Psoas muscle (tissue), 8 donors: ENCODE measurements at regions of chr3 and their contacts with region 1.

Region 1: DNA sequence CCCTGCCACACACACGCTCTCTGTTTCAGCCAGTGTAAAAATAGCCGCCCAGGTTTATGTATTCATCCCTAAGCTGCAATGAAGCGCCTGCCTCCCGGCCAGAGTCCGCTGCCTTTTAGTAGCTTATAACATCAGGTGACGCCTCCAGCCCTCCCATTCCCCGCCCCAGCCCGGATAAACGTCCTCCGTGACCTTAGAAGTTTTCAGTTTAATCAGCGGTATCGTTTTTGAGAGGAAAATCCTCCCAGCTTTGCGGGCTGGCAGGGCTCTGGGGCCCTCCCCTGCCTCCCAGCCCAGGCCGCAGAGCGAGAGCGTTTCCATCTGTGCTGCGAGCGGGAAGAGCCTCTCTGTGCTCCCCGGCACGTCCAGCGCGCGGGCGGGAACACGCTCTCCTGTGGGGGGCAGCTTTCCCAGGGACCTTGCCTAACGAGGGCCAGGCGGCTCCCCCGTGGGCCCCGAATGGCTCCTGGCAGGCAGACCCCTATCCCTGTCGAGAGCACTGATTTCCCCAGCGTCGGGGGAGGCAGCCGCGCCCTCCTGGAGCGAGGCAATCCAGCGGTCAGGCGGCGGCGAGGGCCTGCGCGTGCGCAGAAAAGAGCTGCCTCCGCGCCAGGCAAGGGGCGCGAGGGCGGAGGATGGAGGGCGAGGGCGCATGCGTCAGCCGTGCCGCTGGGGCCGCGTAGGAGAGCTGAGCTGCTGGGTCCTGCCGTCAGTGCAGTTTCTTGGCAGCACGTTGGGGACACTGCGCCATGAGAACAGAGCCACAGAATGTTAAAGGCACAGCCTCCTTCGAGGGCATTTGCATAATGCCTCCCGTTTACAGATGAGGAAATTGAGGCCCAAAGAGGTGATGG is 71.1 kb downstream of the CCNL1 start:
- DNase-seq: peak; percentile 96 to 99
- ATAC-seq: peak; percentile 86 to 95 (median 90)
- H3K4me3 ChIP-seq: peak overlapping the region; percentile 72
- H3K27ac ChIP-seq: peak overlapping the region; percentile 98
- H3K4me1 ChIP-seq: peaks cover 41% of the 10 kb centered on the region
- H3K27me3 ChIP-seq: no peaks in the 10 kb centered on the region
- CTCF ChIP-seq: peak; percentile 14

Region 2: GRCh38 chr3:156554842-156555687 is 533.8 kb before region 1 on chr3 and contains the start of gene SSR3:
- intact Hi-C with region 1: loop called (anchors 5 to 10 kb)
- DNase-seq: peak; percentile 100
- ATAC-seq: peak; percentile 100
- H3K4me3 ChIP-seq: peak within 1 kb of the TSS; percentile 80
- H3K27ac ChIP-seq: peak within 1 kb of the TSS; percentile 82
- H3K4me1 ChIP-seq: peaks cover 34% of the 10 kb centered on the region
- H3K27me3 ChIP-seq: no peaks in the 10 kb centered on the region
- CTCF ChIP-seq: peak; percentile 27
- total RNA-seq, gene SSR3: 53.2 to 121 (median 71.0) TPM

Region 3: GRCh38 chr3:156816800-156817645 is 271.8 kb before region 1 on chr3:
- intact Hi-C with region 1: loop called (anchors 5 to 10 kb)
- DNase-seq: peak; percentile 86 to 90
- ATAC-seq: peak; percentile 89 to 92 (median 90)
- H3K4me3 ChIP-seq: peak overlapping the region; percentile 73
- H3K27ac ChIP-seq: peak overlapping the region; percentile 85
- H3K4me1 ChIP-seq: peaks cover 17% of the 10 kb centered on the region
- H3K27me3 ChIP-seq: no peaks in the 10 kb centered on the region
- CTCF ChIP-seq: no peak

Region 4: GRCh38 chr3:157130467-157131251 is 41.8 kb after region 1 on chr3:
- intact Hi-C with region 1: loop called in 1 of 2 experiments (anchors 2 kb)
- DNase-seq: peak; percentile 61 to 83
- ATAC-seq: peak; percentile 52 to 72 (median 61)
- H3K4me3 ChIP-seq: peak overlapping the region; percentile 45
- H3K27ac ChIP-seq: peak overlapping the region; percentile 74
- H3K4me1 ChIP-seq: peaks cover 40% of the 10 kb centered on the region
- H3K27me3 ChIP-seq: no peaks in the 10 kb centered on the region
- CTCF ChIP-seq: peak; percentile 60

Region 5: GRCh38 chr3:157136647-157137387 is 48.0 kb after region 1 on chr3:
- intact Hi-C with region 1: loop called in 1 of 2 experiments (anchors 2 kb)
- DNase-seq: peak; percentile 25 to 63
- ATAC-seq: peak; percentile 54 to 79 (median 70)
- H3K4me3 ChIP-seq: peak overlapping the region; percentile 43
- H3K27ac ChIP-seq: peak overlapping the region; percentile 71
- H3K4me1 ChIP-seq: peaks cover 37% of the 10 kb centered on the region
- H3K27me3 ChIP-seq: no peaks in the 10 kb centered on the region
- CTCF ChIP-seq: no peak